ENCODE measurements at regions of chr15 and their contacts with region 1.

Region 1: GRCh38 chr15:52039925-52040781 is 21.1 kb downstream of the MAPK6 start:
- DNase-seq: no peak
- ATAC-seq: peak; percentile 19; the same call in 1 of the 3 replicates
- H3K4me3 ChIP-seq: no peak overlapping the region
- H3K27ac ChIP-seq: no peak overlapping the region
- H3K4me1 ChIP-seq: peaks cover 10% of the 10 kb centered on the region; the same call in 1 of the 2 replicates
- H3K27me3 ChIP-seq: no peaks in the 10 kb centered on the region
- CTCF ChIP-seq: no peak
- EP300 ChIP-seq: no peak
- POLR2A ChIP-seq: no peak
- RAD21 ChIP-seq: no peak

Region 2: DNA sequence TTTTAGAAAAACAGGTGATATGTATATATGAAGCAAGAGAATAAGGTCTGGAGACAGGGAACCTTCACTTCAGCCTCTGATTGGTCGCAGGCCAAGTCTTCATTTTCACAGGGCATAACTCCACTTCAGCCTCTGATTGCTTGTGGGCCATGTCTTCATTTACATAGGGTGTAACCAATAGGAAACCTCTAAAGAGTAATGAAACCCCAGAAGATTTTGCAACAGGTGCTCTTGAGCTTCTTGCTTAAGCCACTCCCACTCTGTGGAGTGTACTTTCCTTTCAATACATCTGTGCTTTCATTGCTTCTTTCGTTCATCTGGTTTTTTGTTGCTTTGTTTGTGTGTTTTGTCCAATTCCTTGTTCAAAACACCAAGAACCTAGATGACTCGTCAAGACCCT is 381.5 kb before region 1 on chr15:
- CTCF ChIA-PET with region 1: no interaction called
- POLR2A ChIA-PET with region 1: no interaction called
- RAD21 ChIA-PET with region 1: no interaction called
- SMC1A ChIA-PET with region 1: no interaction called
- in situ Hi-C with region 1: no loop called
- intact Hi-C with region 1: no loop called
- DNase-seq: no peak
- ATAC-seq: peak; percentile 33; the same call in 2 of the 3 replicates
- H3K4me3 ChIP-seq: no peak overlapping the region
- H3K27ac ChIP-seq: no peak overlapping the region
- H3K4me1 ChIP-seq: no peaks in the 10 kb centered on the region
- H3K27me3 ChIP-seq: no peaks in the 10 kb centered on the region
- CTCF ChIP-seq: no peak
- EP300 ChIP-seq: no peak
- POLR2A ChIP-seq: no peak
- RAD21 ChIP-seq: no peak

Region 3: DNA sequence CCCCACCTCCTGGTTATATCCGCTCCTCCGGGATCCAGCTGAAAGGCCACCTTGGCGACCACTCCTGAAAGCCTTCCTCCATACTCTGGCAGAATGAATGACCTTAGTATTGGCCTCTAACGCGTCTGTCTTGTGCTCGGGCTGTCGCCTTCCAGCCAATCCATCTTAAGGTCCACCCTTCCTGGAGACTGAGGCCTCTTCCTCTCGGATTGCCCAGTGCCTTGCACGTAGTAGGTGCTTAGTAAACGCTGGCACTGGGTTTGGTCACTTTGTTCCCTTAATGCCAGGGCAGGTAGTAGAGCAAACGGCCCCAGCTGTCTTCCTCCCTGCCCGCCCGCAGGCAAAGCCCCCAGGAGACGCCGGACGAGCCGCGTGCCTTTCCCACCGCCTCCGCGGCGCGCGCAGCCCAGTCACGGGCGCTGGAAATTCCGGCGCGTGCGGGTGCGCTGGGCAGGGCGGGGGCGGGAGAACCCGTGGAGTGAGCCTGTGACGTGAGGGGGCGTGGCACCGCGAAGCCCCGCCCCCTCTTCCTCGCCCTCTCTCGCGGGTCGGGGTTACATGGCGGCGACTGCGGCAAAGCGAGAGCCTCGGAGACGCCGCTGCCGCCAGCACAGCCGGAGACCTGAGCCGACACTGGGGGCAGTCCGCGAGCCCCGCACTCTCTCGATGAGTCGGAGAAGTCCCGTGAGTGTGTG is 21.3 kb before region 1 on chr15 and contains the start of gene MAPK6:
- CTCF ChIA-PET with region 1: interaction called, 4 read pairs
- POLR2A ChIA-PET with region 1: interaction called, 4 read pairs
- RAD21 ChIA-PET with region 1: interaction called, 3 read pairs
- SMC1A ChIA-PET with region 1: interaction called, 10 read pairs
- in situ Hi-C with region 1: no loop called
- intact Hi-C with region 1: no loop called
- DNase-seq: peak; percentile 71
- ATAC-seq: peak; percentile 69
- H3K4me3 ChIP-seq: peak within 1 kb of the TSS; percentile 91
- H3K27ac ChIP-seq: peak within 1 kb of the TSS; percentile 99
- H3K4me1 ChIP-seq: peaks cover 15% of the 10 kb centered on the region
- H3K27me3 ChIP-seq: no peaks in the 10 kb centered on the region
- CTCF ChIP-seq: no peak
- EP300 ChIP-seq: peak in 1 of 2 experiments; percentile 61; a peak in 1 of 4 replicates
- POLR2A ChIP-seq: peak; percentile 88
- RAD21 ChIP-seq: no peak
- polyA plus RNA-seq, gene MAPK6: 20.6 to 23.4 TPM

Region 4: GRCh38 chr15:52028431-52029093 is 11.6 kb before region 1 on chr15:
- CTCF ChIA-PET with region 1: interaction called, 7 read pairs
- POLR2A ChIA-PET with region 1: interaction called, 13 read pairs
- RAD21 ChIA-PET with region 1: interaction called, 5 read pairs
- SMC1A ChIA-PET with region 1: interaction called, 18 read pairs
- in situ Hi-C with region 1: no loop called
- intact Hi-C with region 1: no loop called
- DNase-seq: no peak
- ATAC-seq: peak; percentile 87
- H3K4me3 ChIP-seq: no peak overlapping the region
- H3K27ac ChIP-seq: peak overlapping the region; percentile 9; the same call in 1 of the 2 replicates
- H3K4me1 ChIP-seq: peaks cover 11% of the 10 kb centered on the region
- H3K27me3 ChIP-seq: no peaks in the 10 kb centered on the region
- CTCF ChIP-seq: no peak
- EP300 ChIP-seq: no peak
- POLR2A ChIP-seq: no peak
- RAD21 ChIP-seq: no peak

Region 5: DNA sequence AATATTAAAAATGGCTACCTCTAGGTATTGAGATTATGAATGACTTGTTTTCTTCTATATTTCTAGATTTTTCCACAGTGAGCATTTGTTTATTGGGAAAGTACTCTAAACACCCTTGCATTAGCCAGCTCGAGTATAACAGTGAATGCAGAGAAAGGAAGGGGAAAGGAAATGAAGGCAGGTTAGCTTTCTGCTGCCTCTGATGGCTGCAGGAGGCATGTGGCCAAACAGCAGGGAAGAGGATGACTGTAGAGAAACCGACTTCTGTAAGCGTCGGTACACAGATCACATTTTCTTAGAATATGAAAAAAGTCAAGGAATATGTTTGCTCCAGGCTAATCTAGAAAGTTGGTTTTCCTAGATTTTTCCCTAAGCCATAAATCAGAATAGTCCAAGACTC is 131.2 kb after region 1 on chr15:
- CTCF ChIA-PET with region 1: no interaction called
- POLR2A ChIA-PET with region 1: no interaction called
- RAD21 ChIA-PET with region 1: no interaction called
- SMC1A ChIA-PET with region 1: no interaction called
- in situ Hi-C with region 1: no loop called
- intact Hi-C with region 1: no loop called
- DNase-seq: no peak
- ATAC-seq: peak; percentile 67
- H3K4me3 ChIP-seq: no peak overlapping the region
- H3K27ac ChIP-seq: no peak overlapping the region
- H3K4me1 ChIP-seq: no peaks in the 10 kb centered on the region
- H3K27me3 ChIP-seq: no peaks in the 10 kb centered on the region
- CTCF ChIP-seq: no peak
- EP300 ChIP-seq: no peak
- POLR2A ChIP-seq: no peak
- RAD21 ChIP-seq: no peak

Region 6: GRCh38 chr15:52217186-52217585 is 177.0 kb after region 1 on chr15:
- CTCF ChIA-PET with region 1: no interaction called
- POLR2A ChIA-PET with region 1: no interaction called
- RAD21 ChIA-PET with region 1: no interaction called
- SMC1A ChIA-PET with region 1: no interaction called
- in situ Hi-C with region 1: no loop called
- intact Hi-C with region 1: no loop called
- DNase-seq: no peak
- ATAC-seq: peak; percentile 74
- H3K4me3 ChIP-seq: no peak overlapping the region
- H3K27ac ChIP-seq: no peak overlapping the region
- H3K4me1 ChIP-seq: peaks cover 15% of the 10 kb centered on the region
- H3K27me3 ChIP-seq: no peaks in the 10 kb centered on the region
- CTCF ChIP-seq: peak; percentile 57 to 73 (median 58)
- EP300 ChIP-seq: no peak
- POLR2A ChIP-seq: no peak
- RAD21 ChIP-seq: peak; percentile 43; the same call in 1 of the 2 replicates